ENCODE measurements at regions of chr5 and their contacts with region 1.

Region 1: DNA sequence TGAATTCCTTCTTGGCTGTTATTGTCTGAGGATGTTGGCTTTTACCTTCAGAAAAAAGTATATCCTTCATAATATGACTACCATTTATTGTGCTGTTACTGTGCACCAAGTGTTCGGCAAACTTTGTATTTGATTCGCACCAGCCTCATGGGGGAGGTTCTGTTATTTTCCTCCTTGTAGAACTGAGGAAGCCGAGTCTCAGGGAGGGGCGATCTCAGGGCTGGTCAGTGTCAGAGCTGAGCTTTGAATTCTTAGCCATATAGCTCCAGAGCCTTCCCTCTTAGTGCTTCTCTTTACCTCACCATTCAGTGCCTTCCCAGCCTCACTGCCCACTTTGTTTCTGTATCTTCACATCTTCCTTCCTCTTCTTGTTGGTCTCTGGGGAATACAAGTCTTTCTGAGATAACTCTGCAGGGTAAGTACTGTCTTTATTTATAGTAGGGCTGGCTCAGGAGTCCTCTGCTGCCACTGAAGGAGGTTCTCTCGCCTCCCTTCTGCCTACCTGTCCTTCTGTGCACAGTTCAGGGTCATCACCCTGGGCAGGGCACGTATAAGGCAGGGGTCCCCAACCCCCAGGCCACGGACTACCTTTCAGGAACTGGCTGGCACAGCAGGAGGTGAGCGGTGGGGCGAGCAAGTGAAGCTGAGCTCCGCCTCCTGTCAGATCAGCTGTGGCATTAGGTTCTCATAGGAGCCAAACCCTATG is 48.4 kb downstream of the GALNT10 start:
- DNase-seq: no peak
- H3K4me3 ChIP-seq: no peak overlapping the region
- H3K4me3 Mint-ChIP-seq: no peak overlapping the region
- H3K27ac ChIP-seq: no peak overlapping the region
- H3K27ac Mint-ChIP-seq: peak overlapping the region in 2 of 7 donors; percentile 2 to 54
- H3K4me1 ChIP-seq: no peaks in the 10 kb centered on the region
- H3K4me1 Mint-ChIP-seq: peaks cover 16 to 47% (median 30%) of the 10 kb centered on the region in 4 donors
- H3K27me3 ChIP-seq: no peaks in the 10 kb centered on the region
- H3K27me3 Mint-ChIP-seq: no peaks in the 10 kb centered on the region

Region 2: GRCh38 chr5:154179846-154180710 is 58.9 kb before region 1 on chr5:
- CTCF ChIA-PET with region 1: interaction called, 17 read pairs
- POLR2A ChIA-PET with region 1: no interaction called
- intact Hi-C with region 1: no loop called
- DNase-seq: peak in 4 of 5 donors; percentile 37 to 52 (median 42)
- H3K4me3 ChIP-seq: no peak overlapping the region
- H3K4me3 Mint-ChIP-seq: no peak overlapping the region
- H3K27ac ChIP-seq: no peak overlapping the region
- H3K27ac Mint-ChIP-seq: no peak overlapping the region
- H3K4me1 ChIP-seq: no peaks in the 10 kb centered on the region
- H3K4me1 Mint-ChIP-seq: peaks cover 0 to 4% (median 2%) of the 10 kb centered on the region in 4 donors
- H3K27me3 ChIP-seq: no peaks in the 10 kb centered on the region
- H3K27me3 Mint-ChIP-seq: peaks cover 2 to 4% of the 10 kb centered on the region in 2 donors

Region 3: DNA sequence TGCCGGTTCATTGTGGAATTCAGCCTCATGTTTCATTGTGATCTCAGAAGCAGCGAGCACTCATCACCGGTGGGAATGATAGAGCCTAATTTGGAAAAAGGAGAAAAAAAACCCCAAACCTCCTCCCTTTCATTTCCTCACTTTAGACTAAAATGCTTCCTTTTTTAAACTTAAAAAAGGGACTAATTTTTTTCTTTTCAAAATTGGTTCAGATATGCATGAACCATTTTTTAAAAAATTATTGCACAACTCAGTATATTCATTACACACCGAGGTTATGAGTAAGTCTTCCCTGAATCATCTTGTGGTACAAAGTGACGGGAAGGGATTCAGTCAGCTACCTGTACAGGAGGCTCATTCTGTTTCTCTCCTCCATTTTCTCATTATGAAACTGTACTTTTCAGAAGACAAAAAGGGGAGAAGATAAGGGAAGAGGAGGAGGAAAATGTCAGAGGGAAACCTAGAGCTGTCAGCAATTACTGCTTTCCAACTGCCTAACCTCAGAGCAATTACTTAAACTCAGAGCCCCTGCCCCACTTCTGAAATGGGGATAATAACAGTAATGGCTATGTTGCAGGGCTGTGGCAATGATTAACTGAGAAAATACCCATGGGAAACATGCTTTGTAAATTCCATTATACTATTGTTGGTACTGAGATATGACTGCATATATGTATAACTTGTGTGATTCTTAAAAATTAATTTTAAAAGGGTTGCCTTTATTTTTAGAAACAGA is 24.4 kb before region 1 on chr5:
- CTCF ChIA-PET with region 1: interaction called, 10 read pairs
- POLR2A ChIA-PET with region 1: no interaction called
- intact Hi-C with region 1: no loop called
- DNase-seq: no peak
- H3K4me3 ChIP-seq: no peak overlapping the region
- H3K4me3 Mint-ChIP-seq: peak overlapping the region in 2 of 8 donors; percentile 19 to 30
- H3K27ac ChIP-seq: no peak overlapping the region
- H3K27ac Mint-ChIP-seq: peak overlapping the region in 5 of 7 donors; percentile 13 to 79 (median 42)
- H3K4me1 ChIP-seq: peaks cover 27% of the 10 kb centered on the region
- H3K4me1 Mint-ChIP-seq: peaks cover 22 to 68% (median 47%) of the 10 kb centered on the region in 4 donors
- H3K27me3 ChIP-seq: no peaks in the 10 kb centered on the region
- H3K27me3 Mint-ChIP-seq: no peaks in the 10 kb centered on the region

Region 4: GRCh38 chr5:154221371-154221896 is 17.5 kb before region 1 on chr5:
- CTCF ChIA-PET with region 1: interaction called, 10 read pairs
- POLR2A ChIA-PET with region 1: interaction called, 3 read pairs
- intact Hi-C with region 1: no loop called
- DNase-seq: peak; percentile 46 to 73 (median 57)
- H3K4me3 ChIP-seq: no peak overlapping the region
- H3K4me3 Mint-ChIP-seq: peak overlapping the region in 5 of 8 donors; percentile 4 to 77 (median 24)
- H3K27ac ChIP-seq: peak overlapping the region; percentile 42
- H3K27ac Mint-ChIP-seq: peak overlapping the region; percentile 75 to 99 (median 96)
- H3K4me1 ChIP-seq: peaks cover 39% of the 10 kb centered on the region
- H3K4me1 Mint-ChIP-seq: peaks cover 33 to 65% (median 51%) of the 10 kb centered on the region in 4 donors
- H3K27me3 ChIP-seq: no peaks in the 10 kb centered on the region
- H3K27me3 Mint-ChIP-seq: no peaks in the 10 kb centered on the region

Measured in CD4-positive, alpha-beta memory T cell (primary cell).